B cell (primary cell): ENCODE measurements at regions of chr2 and their contacts with region 1.

Region 1: GRCh38 chr2:69804416-69804815 is 25.0 kb upstream of the GMCL1 start:
- DNase-seq: no peak
- ATAC-seq: no peak
- H3K4me3 ChIP-seq: no peak overlapping the region
- H3K4me3 Mint-ChIP-seq: peak overlapping the region; percentile 30
- H3K27ac ChIP-seq: no peak overlapping the region
- H3K27ac Mint-ChIP-seq: peak overlapping the region; percentile 17
- H3K4me1 ChIP-seq: peaks cover 44 to 53% of the 10 kb centered on the region in 2 donors
- H3K4me1 Mint-ChIP-seq: peaks cover 44% of the 10 kb centered on the region
- H3K27me3 ChIP-seq: no peaks in the 10 kb centered on the region
- H3K27me3 Mint-ChIP-seq: no peaks in the 10 kb centered on the region
- CTCF ChIP-seq: no peak

Region 2: GRCh38 chr2:69741619-69742466 is 62.6 kb before region 1 on chr2 and contains the start of gene ANXA4:
- CTCF ChIA-PET with region 1: interaction called, 3 read pairs
- POLR2A ChIA-PET with region 1: interaction called, 5 read pairs
- intact Hi-C with region 1: loop called (anchors 5 kb)
- DNase-seq: peak; percentile 68
- ATAC-seq: peak; percentile 82
- H3K4me3 ChIP-seq: peak within 1 kb of the TSS; percentile 74 to 89 (median 75)
- H3K4me3 Mint-ChIP-seq: peak within 1 kb of the TSS; percentile 99
- H3K27ac ChIP-seq: peak within 1 kb of the TSS; percentile 14 to 79
- H3K27ac Mint-ChIP-seq: peak within 1 kb of the TSS; percentile 95
- H3K4me1 ChIP-seq: peaks cover 26 to 41% of the 10 kb centered on the region in 2 donors
- H3K4me1 Mint-ChIP-seq: peaks cover 30% of the 10 kb centered on the region
- H3K27me3 ChIP-seq: no peaks in the 10 kb centered on the region
- H3K27me3 Mint-ChIP-seq: no peaks in the 10 kb centered on the region
- CTCF ChIP-seq: no peak
- total RNA-seq, gene ANXA4: 28.1 and 28.4 TPM in 2 replicates

Region 3: DNA sequence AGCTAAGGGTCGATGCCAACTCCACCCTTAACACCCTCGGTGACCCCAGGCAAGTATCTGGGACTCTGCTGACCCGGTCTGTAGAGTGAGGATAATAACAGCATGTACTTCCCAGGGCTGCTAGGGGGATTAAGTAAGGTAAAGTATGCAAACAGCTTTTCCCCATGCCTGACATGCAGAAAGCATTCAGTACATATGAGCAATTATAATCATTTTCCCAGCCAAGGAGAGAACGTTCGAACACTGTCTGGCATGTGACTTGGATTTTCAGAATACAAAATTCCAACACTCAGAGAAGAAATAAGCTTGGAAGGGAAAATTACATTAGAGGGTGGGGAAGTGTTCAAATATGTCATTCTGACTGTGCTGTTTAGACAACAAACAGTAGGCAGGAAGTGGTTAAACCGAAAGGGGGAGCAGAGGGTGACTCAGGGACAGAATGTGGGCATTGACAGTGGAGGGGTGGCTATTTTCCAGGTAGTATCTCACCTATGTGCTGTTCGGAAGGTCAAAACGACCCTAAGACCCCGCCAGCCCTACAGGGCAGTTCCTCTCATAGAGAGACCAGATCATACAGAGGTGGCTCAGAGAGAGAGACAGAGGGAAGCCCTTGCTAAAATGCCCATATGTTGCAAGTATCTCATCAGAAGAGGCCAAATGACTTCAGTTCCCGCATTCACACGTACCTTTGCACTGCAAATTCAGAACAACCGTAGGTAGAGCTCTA is 142.1 kb after region 1 on chr2:
- CTCF ChIA-PET with region 1: no interaction called
- POLR2A ChIA-PET with region 1: no interaction called
- intact Hi-C with region 1: no loop called
- DNase-seq: no peak
- ATAC-seq: no peak
- H3K4me3 ChIP-seq: no peak overlapping the region
- H3K4me3 Mint-ChIP-seq: no peak overlapping the region
- H3K27ac ChIP-seq: no peak overlapping the region
- H3K27ac Mint-ChIP-seq: no peak overlapping the region
- H3K4me1 ChIP-seq: peaks cover 0 to 8% of the 10 kb centered on the region in 2 donors
- H3K4me1 Mint-ChIP-seq: peaks cover 7% of the 10 kb centered on the region
- H3K27me3 ChIP-seq: no peaks in the 10 kb centered on the region
- H3K27me3 Mint-ChIP-seq: no peaks in the 10 kb centered on the region
- CTCF ChIP-seq: no peak